Astrocyte of the cerebellum (primary cell): ENCODE measurements at regions of chr14 and their contacts with region 1.

Region 1: GRCh38 chr14:68574906-68575305 is 218.0 kb downstream of the ZFP36L1 start:
- DNase-seq: no peak
- H3K4me3 ChIP-seq: no peak overlapping the region
- CTCF ChIP-seq: no peak

Region 2: DNA sequence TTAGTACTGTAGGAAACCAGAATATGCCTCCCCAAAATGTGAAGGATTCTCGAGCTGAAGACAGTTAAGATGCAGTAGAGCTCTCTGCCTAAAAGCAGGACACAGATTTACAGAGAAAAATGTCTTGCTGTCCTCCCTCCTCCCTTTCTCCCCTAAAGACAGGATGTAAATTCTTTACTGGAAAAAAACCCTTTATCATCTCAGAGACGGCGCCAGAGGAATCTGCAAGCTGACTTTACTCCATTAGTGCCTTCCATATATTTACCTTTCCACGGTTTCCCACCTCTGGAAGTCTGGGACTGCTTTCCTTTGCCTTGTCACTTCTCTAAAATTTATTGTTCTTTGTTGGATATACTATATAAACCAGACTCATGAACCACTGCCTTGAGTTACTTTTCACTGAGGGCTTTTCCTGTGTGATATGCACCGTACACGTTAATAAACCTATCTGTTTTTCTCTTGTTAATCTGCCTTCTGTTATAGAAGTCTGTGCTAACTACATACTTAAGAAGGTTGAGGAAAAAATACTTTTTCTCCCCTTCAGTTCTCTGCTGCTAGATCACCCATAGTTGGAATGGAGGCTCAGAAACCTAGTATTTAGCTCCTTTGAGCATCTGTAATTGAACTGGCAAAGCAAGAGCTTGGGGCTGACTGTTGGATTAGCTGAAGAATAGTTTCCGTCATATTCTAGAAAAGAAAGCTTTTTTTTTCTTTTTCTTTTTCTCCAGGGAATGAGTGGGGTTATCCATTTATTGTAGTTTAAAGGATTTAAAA is 655.5 kb before region 1 on chr14:
- in situ Hi-C with region 1: no loop called
- DNase-seq: no peak
- H3K4me3 ChIP-seq: no peak overlapping the region
- CTCF ChIP-seq: no peak

Region 3: GRCh38 chr14:68619816-68620574 is 45.1 kb after region 1 on chr14:
- in situ Hi-C with region 1: loop called (anchors 5 kb)
- DNase-seq: no peak
- H3K4me3 ChIP-seq: no peak overlapping the region
- CTCF ChIP-seq: no peak